Left colon (tissue), 2 donors: ENCODE measurements at regions of chr1 and their contacts with region 1.

Region 1: GRCh38 chr1:156129706-156130581 is 15.4 kb downstream of the LMNA start:
- DNase-seq: peak; percentile 85 to 88
- ATAC-seq: peak; percentile 73

Region 2: DNA sequence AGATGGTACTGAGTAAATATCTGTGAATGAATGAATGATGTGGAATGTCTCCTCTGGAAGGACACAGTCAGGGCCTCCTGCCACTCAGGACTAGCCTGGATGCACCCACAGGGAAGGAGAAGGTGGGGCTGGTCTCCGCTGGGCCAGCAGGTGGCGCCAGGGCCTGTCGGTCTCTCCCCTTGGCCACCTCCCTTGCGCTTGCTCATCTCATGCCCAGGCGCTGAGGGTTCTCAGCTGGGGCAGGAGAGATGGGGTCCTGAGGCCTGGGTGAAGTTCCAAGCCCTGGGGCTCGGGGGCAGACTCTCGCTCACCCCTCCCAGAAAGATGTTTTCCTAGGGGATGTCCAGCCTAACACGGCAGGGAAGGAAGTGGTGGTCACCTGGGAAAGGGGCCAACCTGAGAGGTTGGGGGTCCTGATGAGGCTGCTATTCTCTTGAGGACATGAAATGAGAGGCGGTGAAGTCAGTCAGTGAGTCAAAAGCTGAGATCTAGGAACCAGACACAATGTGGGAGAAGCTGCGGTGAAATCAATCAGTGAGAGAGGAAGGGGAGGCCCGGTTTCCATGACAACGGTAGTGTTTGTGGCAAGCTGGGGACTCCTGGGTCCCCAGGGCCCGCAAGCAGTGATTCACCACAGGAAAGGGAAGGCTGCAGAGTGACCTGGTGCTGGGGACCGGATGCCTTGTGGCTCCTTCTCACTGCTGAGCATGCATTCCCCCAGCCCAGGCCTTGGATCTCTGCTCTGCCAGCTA is 33.1 kb before region 1 on chr1:
- intact Hi-C with region 1: loop called (anchors 2 kb)
- DNase-seq: peak; percentile 87 to 93
- ATAC-seq: peak; percentile 76